ENCODE measurements at regions of chr2 and their contacts with region 1.

Region 1: DNA sequence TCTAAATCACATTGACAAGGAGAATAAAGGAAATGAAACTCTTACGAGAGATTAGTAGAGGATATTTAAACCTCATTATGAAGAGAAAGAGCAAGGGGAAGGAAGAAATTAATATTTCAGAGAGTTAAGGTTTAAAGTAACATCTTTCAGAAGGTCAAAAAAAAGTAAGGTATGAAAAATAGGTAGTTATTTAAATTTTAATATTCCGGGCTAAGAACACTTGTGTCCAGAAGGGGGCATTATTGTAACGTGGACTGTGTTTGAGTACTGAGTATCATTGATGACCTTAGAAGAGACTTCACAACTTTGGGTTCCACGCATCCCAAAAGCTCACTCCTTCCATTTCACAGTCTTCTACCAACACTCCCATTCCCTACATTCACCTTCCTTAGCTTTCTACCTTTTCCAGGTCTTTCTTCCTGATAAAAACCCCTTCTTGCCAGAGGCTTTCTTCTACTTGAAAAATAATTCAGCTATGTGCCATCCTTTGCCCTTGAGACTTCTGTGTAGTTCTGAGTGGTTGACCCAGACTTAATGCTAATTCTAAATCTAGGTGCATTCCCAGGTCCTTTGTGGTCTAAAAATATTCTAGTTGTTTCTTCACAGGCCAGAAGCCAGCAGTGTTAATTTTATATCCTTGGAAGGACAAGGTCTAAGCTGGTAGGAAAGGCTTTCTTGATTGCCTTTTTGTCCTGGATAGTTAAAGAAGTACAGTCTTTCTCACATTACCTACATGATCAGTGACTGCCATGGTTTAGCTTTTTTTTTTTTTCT is 16.5 kb downstream of the DYNC1I2 start:
- DNase-seq: peak; percentile 55
- H3K4me3 Mint-ChIP-seq: no peak overlapping the region
- H3K27ac Mint-ChIP-seq: no peak overlapping the region
- H3K4me1 Mint-ChIP-seq: peaks cover 26% of the 10 kb centered on the region
- H3K27me3 Mint-ChIP-seq: no peaks in the 10 kb centered on the region
- CTCF ChIP-seq: peak; percentile 42

Region 2: GRCh38 chr2:171574149-171574795 is 129.5 kb before region 1 on chr2:
- CTCF ChIA-PET with region 1: interaction called, 21 read pairs
- POLR2A ChIA-PET with region 1: interaction called, 5 read pairs
- intact Hi-C with region 1: loop called (anchors 2 kb)
- DNase-seq: peak; percentile 75
- H3K4me3 Mint-ChIP-seq: no peak overlapping the region
- H3K27ac Mint-ChIP-seq: no peak overlapping the region
- H3K4me1 Mint-ChIP-seq: no peaks in the 10 kb centered on the region
- H3K27me3 Mint-ChIP-seq: no peaks in the 10 kb centered on the region
- CTCF ChIP-seq: peak; percentile 97

Region 3: DNA sequence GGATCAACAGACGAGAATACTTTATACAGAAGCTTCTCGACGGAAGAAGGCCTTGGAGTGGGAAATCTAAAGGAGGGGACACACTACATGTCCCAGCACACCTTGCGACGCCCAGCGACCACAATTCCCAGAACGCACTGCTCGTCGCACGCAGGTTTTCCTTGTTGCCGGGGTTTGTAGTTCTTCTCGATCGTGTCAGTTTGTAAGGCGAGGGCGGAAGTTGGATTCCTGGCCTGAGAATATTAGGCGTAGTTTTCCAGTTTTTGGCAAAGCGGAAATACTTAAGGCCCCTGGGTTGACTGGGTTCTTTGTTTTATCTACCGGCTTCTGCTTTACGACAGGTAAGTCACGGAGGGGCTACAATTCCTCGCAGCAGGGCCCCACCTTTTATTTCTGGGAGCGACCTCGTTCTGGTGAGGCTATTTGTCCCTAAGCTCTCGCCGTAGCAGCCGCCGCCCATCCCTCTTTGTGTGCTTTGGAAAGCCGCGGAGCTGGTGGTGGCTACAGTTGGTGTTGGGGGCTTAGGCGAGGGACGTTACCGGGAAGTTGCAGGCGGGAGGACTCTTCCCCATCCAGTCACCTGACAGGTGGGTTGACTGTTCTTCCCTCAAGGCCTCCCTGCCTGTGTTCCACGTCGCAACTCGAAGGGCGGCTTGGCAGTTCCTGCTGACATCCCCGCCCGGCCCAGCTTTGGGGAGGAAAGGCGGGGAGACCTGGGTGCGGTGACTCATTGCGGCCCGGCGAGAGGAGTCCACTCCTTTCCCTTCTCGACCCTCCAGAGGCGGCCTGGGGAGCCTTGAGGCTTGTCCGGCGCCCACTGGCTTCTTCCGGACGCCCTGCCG is 16.3 kb before region 1 on chr2 and contains the start of gene DYNC1I2:
- CTCF ChIA-PET with region 1: interaction called, 24 read pairs
- POLR2A ChIA-PET with region 1: interaction called, 58 read pairs
- intact Hi-C with region 1: no loop called
- DNase-seq: peak; percentile 96
- H3K4me3 Mint-ChIP-seq: peak within 1 kb of the TSS; percentile 96
- H3K27ac Mint-ChIP-seq: peak within 1 kb of the TSS; percentile 95
- H3K4me1 Mint-ChIP-seq: no peaks in the 10 kb centered on the region
- H3K27me3 Mint-ChIP-seq: peaks cover 6% of the 10 kb centered on the region
- CTCF ChIP-seq: no peak
- total RNA-seq, gene DYNC1I2: 77.7 and 82.7 TPM in 2 replicates

Region 4: DNA sequence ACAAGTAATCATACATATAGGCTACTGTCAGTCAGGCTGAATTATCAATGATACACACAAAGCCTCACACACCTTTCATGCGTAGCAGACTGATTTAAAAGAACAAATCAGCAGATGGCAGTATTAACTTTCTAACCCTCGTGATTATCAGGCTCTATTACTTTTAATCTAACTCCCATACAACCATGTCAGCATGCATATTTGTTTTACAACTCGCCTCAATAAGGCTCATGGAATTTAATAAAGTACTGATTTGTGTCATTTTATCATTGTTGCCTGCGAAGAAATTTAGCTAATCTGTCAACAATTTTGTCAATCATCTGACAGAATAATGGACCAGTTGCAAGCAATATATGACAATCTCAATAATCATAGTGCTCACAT is 107.5 kb after region 1 on chr2:
- CTCF ChIA-PET with region 1: interaction called, 3 read pairs
- POLR2A ChIA-PET with region 1: no interaction called
- intact Hi-C with region 1: loop called (anchors 5 kb)
- DNase-seq: peak; percentile 46
- H3K4me3 Mint-ChIP-seq: no peak overlapping the region
- H3K27ac Mint-ChIP-seq: no peak overlapping the region
- H3K4me1 Mint-ChIP-seq: peaks cover 12% of the 10 kb centered on the region
- H3K27me3 Mint-ChIP-seq: no peaks in the 10 kb centered on the region
- CTCF ChIP-seq: peak; percentile 34

Region 5: DNA sequence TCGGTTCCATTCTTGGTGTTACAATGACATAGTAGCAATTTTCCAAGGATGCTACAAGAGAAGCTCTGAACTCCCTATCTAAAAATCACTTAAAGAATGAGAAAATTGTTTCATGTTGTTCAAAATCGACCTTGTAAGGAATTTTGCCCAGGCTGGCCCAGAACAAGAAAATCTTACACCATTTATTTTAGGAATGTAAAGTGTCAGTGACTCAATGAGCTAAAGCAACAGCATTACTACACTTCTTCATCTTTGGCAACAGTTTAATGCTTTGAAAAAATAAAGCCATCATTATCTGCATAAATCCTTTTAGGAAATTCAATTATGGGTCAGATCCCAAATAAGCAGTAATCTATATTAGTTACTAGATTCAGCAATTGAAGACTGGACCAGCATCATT is 151.6 kb after region 1 on chr2:
- CTCF ChIA-PET with region 1: no interaction called
- POLR2A ChIA-PET with region 1: no interaction called
- intact Hi-C with region 1: no loop called
- DNase-seq: no peak
- H3K4me3 Mint-ChIP-seq: no peak overlapping the region
- H3K27ac Mint-ChIP-seq: no peak overlapping the region
- H3K4me1 Mint-ChIP-seq: peaks cover 5% of the 10 kb centered on the region
- H3K27me3 Mint-ChIP-seq: no peaks in the 10 kb centered on the region
- CTCF ChIP-seq: no peak

Region 6: GRCh38 chr2:172131713-172132555 is 428.2 kb after region 1 on chr2:
- CTCF ChIA-PET with region 1: interaction called, 12 read pairs
- POLR2A ChIA-PET with region 1: interaction called, 3 read pairs
- intact Hi-C with region 1: no loop called
- DNase-seq: no peak
- H3K4me3 Mint-ChIP-seq: no peak overlapping the region
- H3K27ac Mint-ChIP-seq: peak overlapping the region; percentile 27
- H3K4me1 Mint-ChIP-seq: peaks cover 8% of the 10 kb centered on the region
- H3K27me3 Mint-ChIP-seq: no peaks in the 10 kb centered on the region
- CTCF ChIP-seq: no peak

Measured in MCF 10A (cell line).